Naive thymus-derived CD8-positive, alpha-beta T cell (primary cell): ENCODE measurements at regions of chr15 and their contacts with region 1.

Region 1: GRCh38 chr15:72231066-72231846 is at the start of gene PKM:
- DNase-seq: peak; percentile 84 to 96 (median 88)
- ATAC-seq: peak; percentile 43 to 46
- H3K4me3 Mint-ChIP-seq: peak within 1 kb of the TSS; percentile 94 to 99 (median 98)
- H3K27ac Mint-ChIP-seq: peak within 1 kb of the TSS; percentile 86 to 99 (median 96)
- H3K4me1 Mint-ChIP-seq: peaks cover 25 to 56% (median 47%) of the 10 kb centered on the region in 4 donors
- H3K27me3 Mint-ChIP-seq: no peaks in the 10 kb centered on the region
- polyA plus RNA-seq, gene PKM: 305 to 330 (median 318) TPM

Region 2: DNA sequence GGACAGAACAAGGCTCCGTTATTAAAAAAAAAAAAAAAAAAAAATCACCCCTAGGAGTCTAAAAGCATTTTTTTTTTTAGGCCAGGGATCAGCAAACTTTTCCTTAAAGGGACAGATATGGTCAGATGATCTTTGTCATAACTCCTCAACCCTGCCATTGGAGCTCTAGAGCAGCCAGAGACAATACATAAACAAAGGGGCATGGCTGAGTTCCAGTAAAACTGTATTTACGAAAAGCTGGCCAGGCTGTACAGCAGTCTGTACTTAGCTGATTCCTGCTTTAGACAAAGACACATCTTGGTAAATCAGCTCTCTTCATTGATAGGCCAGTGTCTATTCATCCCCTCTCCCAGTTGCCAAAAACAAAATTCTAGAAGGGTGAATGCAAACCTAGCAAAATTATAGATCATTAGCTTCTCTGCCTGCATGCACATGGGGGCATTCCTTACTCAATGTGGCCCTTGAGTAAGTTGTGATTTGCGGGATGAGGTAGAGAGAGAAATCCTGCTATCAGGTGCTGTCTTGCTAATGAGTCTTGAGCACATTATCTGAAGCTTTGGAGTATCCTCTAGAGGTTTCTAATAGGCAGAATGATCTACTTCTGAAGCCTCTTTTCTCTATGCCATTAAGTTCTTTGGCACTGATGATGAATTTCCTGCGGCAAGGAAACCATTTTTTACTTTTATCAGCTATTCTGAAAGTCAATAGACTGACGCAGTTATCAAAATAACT is 77.8 kb before region 1 on chr15:
- POLR2A ChIA-PET with region 1: no interaction called
- DNase-seq: no peak
- ATAC-seq: no peak
- H3K4me3 Mint-ChIP-seq: no peak overlapping the region
- H3K27ac Mint-ChIP-seq: no peak overlapping the region
- H3K4me1 Mint-ChIP-seq: peaks cover 2 to 9% (median 7%) of the 10 kb centered on the region in 4 donors
- H3K27me3 Mint-ChIP-seq: peaks cover 0 to 3% (median 2%) of the 10 kb centered on the region in 5 donors

Region 3: DNA sequence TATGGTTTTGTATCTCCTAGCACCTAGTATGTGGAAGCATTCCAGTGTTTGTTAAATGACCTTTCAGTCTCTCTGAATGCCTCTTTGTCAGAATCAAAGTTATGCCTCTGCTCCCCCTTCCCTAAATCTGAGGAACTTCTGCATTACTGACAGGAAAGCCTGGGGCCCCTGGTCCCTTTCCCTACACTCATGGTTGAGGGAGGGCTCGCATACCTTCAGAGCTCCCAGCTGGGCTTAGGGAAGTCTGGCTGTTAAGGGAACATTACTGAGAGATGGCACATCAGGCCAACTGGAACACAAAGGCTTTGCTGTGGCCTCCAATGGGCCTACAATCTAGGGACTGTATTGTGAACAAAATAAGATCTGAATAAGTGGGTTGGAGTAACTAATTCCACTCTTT is 10.6 kb before region 1 on chr15:
- POLR2A ChIA-PET with region 1: interaction called, 11 read pairs
- DNase-seq: no peak
- ATAC-seq: no peak
- H3K4me3 Mint-ChIP-seq: no peak overlapping the region
- H3K27ac Mint-ChIP-seq: peak overlapping the region in 9 of 10 donors; percentile 28 to 76 (median 59)
- H3K4me1 Mint-ChIP-seq: peaks cover 28 to 64% (median 58%) of the 10 kb centered on the region in 4 donors
- H3K27me3 Mint-ChIP-seq: no peaks in the 10 kb centered on the region

Region 4: GRCh38 chr15:72272213-72273002 is 41.2 kb after region 1 on chr15 and contains the start of gene PARP6:
- POLR2A ChIA-PET with region 1: interaction called, 46 read pairs
- DNase-seq: peak; percentile 92 to 99 (median 98)
- ATAC-seq: peak; percentile 95
- H3K4me3 Mint-ChIP-seq: peak within 1 kb of the TSS; percentile 84 to 94 (median 90)
- H3K27ac Mint-ChIP-seq: peak within 1 kb of the TSS; percentile 87 to 96 (median 94)
- H3K4me1 Mint-ChIP-seq: peaks cover 18 to 50% (median 44%) of the 10 kb centered on the region in 4 donors
- H3K27me3 Mint-ChIP-seq: no peaks in the 10 kb centered on the region
- polyA plus RNA-seq, gene PARP6: 13.1 to 38.2 (median 13.9) TPM